Prostate gland (tissue), 2 donors: ENCODE measurements at regions of chr20 and their contacts with region 1.

Region 1: GRCh38 chr20:54062812-54063280 is 7.5 kb downstream of the BCAS1 start:
- DNase-seq: no peak
- H3K4me3 ChIP-seq: no peak overlapping the region
- H3K27ac ChIP-seq: no peak overlapping the region
- H3K4me1 ChIP-seq: no peaks in the 10 kb centered on the region
- H3K27me3 ChIP-seq: no peaks in the 10 kb centered on the region
- CTCF ChIP-seq: peak in 3 of 4 experiments; percentile 34 to 58 (median 48)
- POLR2A ChIP-seq: no peak

Region 2: DNA sequence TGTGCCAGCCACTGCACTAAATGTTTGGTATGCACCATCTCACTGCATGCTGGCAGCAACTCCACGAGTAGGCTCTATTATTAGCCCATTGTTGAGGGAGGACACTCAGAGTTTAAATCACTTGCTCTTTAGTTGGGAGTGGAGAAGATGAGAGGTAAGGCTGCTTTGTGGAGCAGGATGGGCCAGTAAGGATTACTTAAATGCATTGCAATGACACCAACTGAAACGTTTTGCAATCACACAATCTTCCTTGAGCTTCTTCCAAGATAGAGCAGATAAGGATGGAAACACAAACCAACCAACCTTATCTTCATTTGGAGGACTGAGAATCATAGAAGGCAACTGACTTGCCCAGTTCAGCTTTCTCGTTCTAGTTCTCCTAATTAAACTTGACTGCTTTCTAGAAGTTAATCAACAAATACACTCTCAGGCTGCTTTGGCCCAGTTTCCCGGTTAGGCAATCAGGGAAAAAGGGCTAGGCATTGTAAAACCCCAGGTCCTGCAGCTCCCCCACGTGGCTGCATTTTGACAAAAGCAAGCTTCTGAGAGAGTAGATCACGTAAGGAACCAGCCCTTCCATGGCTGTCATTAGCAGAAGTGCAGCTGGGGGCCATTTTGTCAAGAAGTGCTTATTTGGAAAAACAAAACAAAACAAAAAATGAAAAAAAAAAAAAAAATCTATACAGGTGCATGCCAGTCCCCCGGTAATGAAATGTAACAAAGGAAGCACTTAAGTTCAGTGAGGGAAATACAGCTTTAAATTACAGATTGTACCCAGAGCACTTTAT is 123.1 kb before region 1 on chr20:
- intact Hi-C with region 1: loop called (anchors 10 kb)
- DNase-seq: peak; percentile 92
- H3K4me3 ChIP-seq: no peak overlapping the region
- H3K27ac ChIP-seq: peak overlapping the region; percentile 12 to 31
- H3K4me1 ChIP-seq: peaks cover 2% of the 10 kb centered on the region
- H3K27me3 ChIP-seq: no peaks in the 10 kb centered on the region
- CTCF ChIP-seq: peak in 3 of 4 experiments; percentile 66 to 80 (median 79)
- POLR2A ChIP-seq: no peak